BJ (cell line): ENCODE measurements at regions of chr9 and their contacts with region 1.

Region 1: GRCh38 chr9:70987986-70988385 is 133.4 kb downstream of the TRPM3 start:
- DNase-seq: peak; percentile 79
- H3K4me3 ChIP-seq: no peak overlapping the region
- H3K27me3 ChIP-seq: no peaks in the 10 kb centered on the region
- CTCF ChIP-seq: no peak

Region 2: GRCh38 chr9:71001780-71002386 is 13.9 kb after region 1 on chr9:
- CTCF ChIA-PET with region 1: interaction called, 11 read pairs
- POLR2A ChIA-PET with region 1: no interaction called
- DNase-seq: no peak
- H3K4me3 ChIP-seq: no peak overlapping the region
- H3K27me3 ChIP-seq: no peaks in the 10 kb centered on the region
- CTCF ChIP-seq: peak; percentile 61

Region 3: GRCh38 chr9:71179183-71179582 is 191.2 kb after region 1 on chr9:
- CTCF ChIA-PET with region 1: no interaction called
- POLR2A ChIA-PET with region 1: interaction called, 15 read pairs
- DNase-seq: no peak
- H3K4me3 ChIP-seq: no peak overlapping the region
- H3K27me3 ChIP-seq: no peaks in the 10 kb centered on the region
- CTCF ChIP-seq: no peak